CD14-positive monocyte (primary cell): ENCODE measurements at regions of chr2 and their contacts with region 1.

Region 1: GRCh38 chr2:181891258-181891965 is at the start of gene ITPRID2:
- DNase-seq: peak; percentile 83 to 84 (median 83)
- H3K4me3 ChIP-seq: peak within 1 kb of the TSS; percentile 73 to 91 (median 87)
- H3K4me3 Mint-ChIP-seq: peak within 1 kb of the TSS; percentile 97 to 99
- H3K27ac ChIP-seq: peak within 1 kb of the TSS; percentile 97 to 98
- H3K27ac Mint-ChIP-seq: peak within 1 kb of the TSS; percentile 97 to 99 (median 98)
- H3K4me1 ChIP-seq: peaks cover 18 to 36% of the 10 kb centered on the region in 2 donors
- H3K4me1 Mint-ChIP-seq: peaks cover 33% of the 10 kb centered on the region
- H3K27me3 ChIP-seq: no peaks in the 10 kb centered on the region
- H3K27me3 Mint-ChIP-seq: no peaks in the 10 kb centered on the region
- CTCF ChIP-seq: peak; percentile 19
- polyA plus RNA-seq, gene ITPRID2: 17.9 to 50.2 (median 23.0) TPM

Region 2: GRCh38 chr2:181850936-181851560 is 40.4 kb before region 1 on chr2:
- intact Hi-C with region 1: loop called (anchors 5 to 10 kb)
- DNase-seq: peak; percentile 41 to 82 (median 55)
- H3K4me3 ChIP-seq: peak overlapping the region in 1 of 3 experiments; percentile 57
- H3K4me3 Mint-ChIP-seq: peak overlapping the region; percentile 25 to 83
- H3K27ac ChIP-seq: peak overlapping the region in 1 of 2 donors; percentile 84
- H3K27ac Mint-ChIP-seq: peak overlapping the region; percentile 87 to 93 (median 92)
- H3K4me1 ChIP-seq: peaks cover 48 to 65% of the 10 kb centered on the region in 2 donors
- H3K4me1 Mint-ChIP-seq: peaks cover 52% of the 10 kb centered on the region
- H3K27me3 ChIP-seq: no peaks in the 10 kb centered on the region
- H3K27me3 Mint-ChIP-seq: no peaks in the 10 kb centered on the region
- CTCF ChIP-seq: no peak

Region 3: DNA sequence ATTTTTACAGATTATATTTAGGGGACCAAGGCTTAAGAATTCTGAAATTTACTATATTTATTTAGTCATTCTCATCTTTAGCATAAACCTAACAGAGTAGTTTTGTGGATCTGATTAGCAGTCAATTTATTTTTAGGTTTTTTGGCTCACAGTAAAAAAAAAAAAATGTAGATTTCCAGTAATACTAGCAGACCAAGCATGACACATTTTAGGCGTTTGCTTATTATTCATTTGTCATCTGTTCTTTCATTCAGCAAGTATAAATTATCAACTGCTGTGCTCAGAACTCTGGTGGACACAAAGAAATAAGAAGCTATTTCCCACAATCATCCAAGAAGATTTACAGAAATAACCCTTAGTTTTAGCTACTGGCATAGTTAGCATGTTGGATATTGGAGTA is 514.8 kb after region 1 on chr2:
- intact Hi-C with region 1: no loop called
- DNase-seq: no peak
- H3K4me3 ChIP-seq: no peak overlapping the region
- H3K4me3 Mint-ChIP-seq: no peak overlapping the region
- H3K27ac ChIP-seq: no peak overlapping the region
- H3K27ac Mint-ChIP-seq: no peak overlapping the region
- H3K4me1 ChIP-seq: no peaks in the 10 kb centered on the region
- H3K4me1 Mint-ChIP-seq: no peaks in the 10 kb centered on the region
- H3K27me3 ChIP-seq: no peaks in the 10 kb centered on the region
- H3K27me3 Mint-ChIP-seq: no peaks in the 10 kb centered on the region
- CTCF ChIP-seq: no peak

Region 4: DNA sequence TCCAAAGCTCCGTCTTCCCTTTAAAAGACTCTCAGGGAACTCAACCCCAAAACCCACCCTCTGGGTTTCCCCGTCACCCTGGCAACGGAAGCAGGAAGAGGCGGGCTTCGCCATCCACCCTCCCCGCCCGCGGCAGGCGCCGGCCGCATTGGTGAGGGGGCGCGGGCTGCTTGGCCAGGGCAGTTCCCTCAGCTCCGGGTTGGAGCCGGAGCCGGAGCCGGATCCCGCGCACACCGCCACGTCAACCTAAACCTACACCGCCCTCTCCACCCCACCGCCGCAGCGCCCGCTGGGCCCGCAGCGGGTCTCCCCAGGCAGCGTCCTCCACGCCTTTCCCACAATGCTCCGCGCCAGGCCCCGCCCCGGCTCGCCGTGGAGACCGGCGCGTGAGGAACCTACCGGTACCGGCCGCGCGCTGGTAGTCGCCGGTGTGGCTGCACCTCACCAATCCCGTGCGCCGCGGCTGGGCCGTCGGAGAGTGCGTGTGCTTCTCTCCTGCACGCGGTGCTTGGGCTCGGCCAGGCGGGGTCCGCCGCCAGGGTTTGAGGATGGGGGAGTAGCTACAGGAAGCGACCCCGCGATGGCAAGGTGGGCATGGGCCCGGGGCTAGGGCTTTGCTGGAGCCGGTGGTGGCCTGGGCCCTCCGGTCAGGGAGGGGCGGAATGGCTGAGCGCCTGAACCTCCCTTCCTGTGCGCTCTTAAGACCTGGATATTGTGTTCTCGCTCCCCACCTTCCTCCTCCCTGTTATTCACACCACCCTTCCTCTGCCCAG is 824.7 kb after region 1 on chr2 and contains the start of gene DNAJC10:
- intact Hi-C with region 1: loop called in 1 of 2 experiments (anchors 10 kb)
- DNase-seq: peak; percentile 79 to 90 (median 82)
- H3K4me3 ChIP-seq: peak within 1 kb of the TSS; percentile 78 to 97 (median 96)
- H3K4me3 Mint-ChIP-seq: no peak within 1 kb of the TSS
- H3K27ac ChIP-seq: peak within 1 kb of the TSS; percentile 49 to 91
- H3K27ac Mint-ChIP-seq: no peak within 1 kb of the TSS
- H3K4me1 ChIP-seq: peaks cover 46 to 54% of the 10 kb centered on the region in 2 donors
- H3K4me1 Mint-ChIP-seq: peaks cover 3% of the 10 kb centered on the region
- H3K27me3 ChIP-seq: no peaks in the 10 kb centered on the region
- H3K27me3 Mint-ChIP-seq: peaks cover 0 to 2% (median 0%) of the 10 kb centered on the region in 3 donors
- CTCF ChIP-seq: no peak
- polyA plus RNA-seq, gene DNAJC10: 25.2 to 102 (median 79.4) TPM